CD4-positive, alpha-beta T cell (primary cell): ENCODE measurements at regions of chr16 and their contacts with region 1.

Region 1: GRCh38 chr16:82229796-82230619 is 60.0 kb upstream of the MPHOSPH6 start:
- DNase-seq: peak; percentile 32 to 76 (median 51)
- ATAC-seq: no peak
- H3K4me3 ChIP-seq: no peak overlapping the region
- H3K4me3 Mint-ChIP-seq: no peak overlapping the region
- H3K27ac ChIP-seq: no peak overlapping the region
- H3K27ac Mint-ChIP-seq: no peak overlapping the region
- H3K4me1 ChIP-seq: no peaks in the 10 kb centered on the region
- H3K4me1 Mint-ChIP-seq: no peaks in the 10 kb centered on the region
- H3K27me3 ChIP-seq: no peaks in the 10 kb centered on the region
- H3K27me3 Mint-ChIP-seq: peaks cover 22% of the 10 kb centered on the region
- CTCF ChIP-seq: peak; percentile 93

Region 2: DNA sequence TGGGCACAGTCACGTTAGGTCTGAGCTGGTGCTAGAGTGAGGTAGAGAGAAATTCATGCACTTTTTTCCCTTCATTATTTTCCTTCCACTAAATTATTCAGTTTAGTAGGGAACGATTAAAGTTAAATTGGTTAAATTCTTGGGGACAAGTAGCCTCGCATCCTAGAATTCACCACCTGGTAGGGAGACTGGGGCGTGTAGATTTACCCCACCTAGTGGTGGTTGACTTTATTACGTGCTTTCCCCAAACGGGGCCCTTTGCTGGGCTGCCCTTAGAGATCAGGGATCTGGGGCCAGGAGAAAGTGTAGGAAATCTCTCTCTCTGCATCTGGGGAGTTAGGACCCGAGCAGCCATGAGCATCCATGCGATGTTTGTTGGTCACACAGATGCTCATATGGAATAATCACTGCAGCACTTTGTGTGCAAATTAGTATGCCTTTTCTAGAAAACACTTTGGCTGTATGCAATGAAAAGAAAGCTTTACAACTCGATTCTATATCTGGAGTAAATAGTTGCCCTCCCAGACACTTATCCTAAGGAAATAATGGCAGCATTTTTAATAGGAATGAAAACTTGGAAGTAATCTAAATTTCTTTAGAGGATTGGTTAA is 343.9 kb before region 1 on chr16:
- CTCF ChIA-PET with region 1: interaction called, 4 read pairs
- POLR2A ChIA-PET with region 1: no interaction called
- intact Hi-C with region 1: loop called in 1 of 2 experiments (anchors 1 kb)
- DNase-seq: peak in 4 of 14 experiments; percentile 9 to 41 (median 26)
- ATAC-seq: no peak
- H3K4me3 ChIP-seq: no peak overlapping the region
- H3K4me3 Mint-ChIP-seq: no peak overlapping the region
- H3K27ac ChIP-seq: no peak overlapping the region
- H3K27ac Mint-ChIP-seq: no peak overlapping the region
- H3K4me1 ChIP-seq: no peaks in the 10 kb centered on the region
- H3K4me1 Mint-ChIP-seq: no peaks in the 10 kb centered on the region
- H3K27me3 ChIP-seq: no peaks in the 10 kb centered on the region
- H3K27me3 Mint-ChIP-seq: no peaks in the 10 kb centered on the region
- CTCF ChIP-seq: peak; percentile 70

Region 3: GRCh38 chr16:81940781-81941560 is 289.0 kb before region 1 on chr16:
- CTCF ChIA-PET with region 1: interaction called, 5 read pairs
- POLR2A ChIA-PET with region 1: no interaction called
- intact Hi-C with region 1: loop called (anchors 1 kb)
- DNase-seq: peak in 3 of 14 experiments; percentile 38 to 52 (median 44)
- ATAC-seq: no peak
- H3K4me3 ChIP-seq: no peak overlapping the region
- H3K4me3 Mint-ChIP-seq: no peak overlapping the region
- H3K27ac ChIP-seq: no peak overlapping the region
- H3K27ac Mint-ChIP-seq: no peak overlapping the region
- H3K4me1 ChIP-seq: no peaks in the 10 kb centered on the region
- H3K4me1 Mint-ChIP-seq: no peaks in the 10 kb centered on the region
- H3K27me3 ChIP-seq: no peaks in the 10 kb centered on the region
- H3K27me3 Mint-ChIP-seq: no peaks in the 10 kb centered on the region
- CTCF ChIP-seq: peak; percentile 29

Region 4: DNA sequence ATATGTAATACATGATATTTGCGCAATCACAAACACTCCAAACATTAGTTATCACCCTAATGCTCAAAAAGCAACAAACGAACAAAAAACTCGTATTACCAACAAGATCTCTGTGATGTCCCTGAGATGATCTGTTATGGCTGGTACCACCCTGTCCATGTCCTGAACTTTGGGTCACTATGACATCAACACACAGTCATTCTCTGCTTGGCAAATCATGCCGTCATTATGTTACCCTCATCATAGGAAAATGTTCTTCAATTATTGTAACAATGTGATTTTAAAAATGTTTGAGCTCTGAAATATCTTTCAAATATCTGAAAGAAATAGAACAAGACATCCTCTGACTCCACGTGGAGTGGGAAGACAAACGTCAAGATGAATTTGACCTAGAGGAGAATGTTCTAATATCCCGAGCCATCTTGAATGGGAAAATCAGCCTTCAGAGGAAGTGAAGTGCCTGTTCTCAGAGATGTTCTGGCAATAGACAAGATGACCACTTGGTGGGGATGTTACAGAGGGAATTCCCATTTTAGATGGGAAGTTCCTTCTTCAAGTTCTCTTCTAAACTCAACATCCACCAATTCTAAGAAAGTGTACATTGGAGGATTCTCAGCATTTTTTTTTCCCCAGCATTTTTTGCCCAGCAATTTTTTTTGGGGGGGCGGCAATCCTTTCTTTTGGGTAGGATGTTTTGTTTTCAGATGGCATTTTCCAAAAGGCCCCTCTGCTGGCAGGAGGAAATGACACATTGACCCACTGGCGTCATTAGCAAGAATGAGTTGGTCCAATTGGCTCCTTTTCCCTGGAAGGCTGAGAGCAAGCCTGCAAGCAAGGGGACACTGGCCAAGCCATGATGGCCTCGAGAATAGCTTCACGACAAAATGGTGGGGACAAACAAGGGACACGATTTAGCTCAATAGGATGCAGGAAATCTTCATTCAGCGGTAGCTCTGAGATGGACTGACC is 198.6 kb before region 1 on chr16:
- CTCF ChIA-PET with region 1: no interaction called
- POLR2A ChIA-PET with region 1: no interaction called
- intact Hi-C with region 1: loop called in 1 of 2 experiments (anchors 2 kb)
- DNase-seq: peak in 2 of 14 experiments; percentile 26 to 39
- ATAC-seq: no peak
- H3K4me3 ChIP-seq: no peak overlapping the region
- H3K4me3 Mint-ChIP-seq: no peak overlapping the region
- H3K27ac ChIP-seq: no peak overlapping the region
- H3K27ac Mint-ChIP-seq: no peak overlapping the region
- H3K4me1 ChIP-seq: no peaks in the 10 kb centered on the region
- H3K4me1 Mint-ChIP-seq: no peaks in the 10 kb centered on the region
- H3K27me3 ChIP-seq: peaks cover 7 to 9% of the 10 kb centered on the region in 2 experiments
- H3K27me3 Mint-ChIP-seq: peaks cover 35% of the 10 kb centered on the region
- CTCF ChIP-seq: peak; percentile 16

Region 5: GRCh38 chr16:82181456-82182185 is 48.4 kb before region 1 on chr16:
- CTCF ChIA-PET with region 1: no interaction called
- POLR2A ChIA-PET with region 1: no interaction called
- intact Hi-C with region 1: no loop called
- DNase-seq: no peak
- ATAC-seq: no peak
- H3K4me3 ChIP-seq: no peak overlapping the region
- H3K4me3 Mint-ChIP-seq: no peak overlapping the region
- H3K27ac ChIP-seq: no peak overlapping the region
- H3K27ac Mint-ChIP-seq: no peak overlapping the region
- H3K4me1 ChIP-seq: no peaks in the 10 kb centered on the region
- H3K4me1 Mint-ChIP-seq: no peaks in the 10 kb centered on the region
- H3K27me3 ChIP-seq: peaks cover 0 to 4% of the 10 kb centered on the region in 2 experiments
- H3K27me3 Mint-ChIP-seq: peaks cover 45% of the 10 kb centered on the region
- CTCF ChIP-seq: no peak